Dendritic cell treated with granulocyte-macrophage colony-stimulating factor and Interleukin-4, amounts not matched to agents 40 ng/mL and 50 ng/mL, for 4 days (primary cell): ENCODE measurements at regions of chr6 and their contacts with region 1.

Region 1: DNA sequence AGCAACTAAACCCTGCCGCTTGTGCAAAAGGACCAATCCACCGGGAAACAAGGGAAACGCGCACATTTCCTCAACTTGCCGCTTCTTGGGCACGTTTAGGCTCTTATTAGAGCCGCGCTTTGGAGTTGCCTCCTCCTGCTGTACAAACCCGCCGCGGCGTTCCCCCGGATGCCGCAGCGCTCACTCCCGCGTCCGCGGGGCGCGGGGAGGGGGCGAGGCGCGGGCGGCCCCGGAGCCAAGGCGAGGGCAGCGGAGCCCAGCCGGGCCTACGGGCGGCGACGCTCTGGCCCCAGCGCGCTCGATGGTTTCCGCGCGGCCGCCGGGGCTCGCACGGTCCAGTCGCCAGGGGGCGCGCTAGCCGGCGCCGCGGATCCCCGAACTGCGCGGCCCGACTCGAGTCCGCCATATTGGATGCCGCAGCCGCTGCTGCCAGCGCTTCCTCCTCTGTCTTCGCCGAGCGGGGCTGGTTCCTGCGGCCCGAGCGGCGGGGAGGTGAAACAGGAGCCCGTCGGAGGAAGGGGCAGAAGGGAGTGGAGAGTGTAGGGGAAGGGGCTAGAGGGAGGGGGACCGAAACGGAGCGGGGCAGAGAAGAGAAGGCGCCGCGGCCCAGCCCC is at the start of gene SCAF8:
- H3K4me3 Mint-ChIP-seq: peak within 1 kb of the TSS; percentile 94
- H3K27ac Mint-ChIP-seq: peak within 1 kb of the TSS; percentile 99
- H3K4me1 Mint-ChIP-seq: peaks cover 39% of the 10 kb centered on the region
- H3K27me3 Mint-ChIP-seq: peaks cover 3% of the 10 kb centered on the region

Region 2: GRCh38 chr6:154352898-154353585 is 380.1 kb before region 1 on chr6:
- intact Hi-C with region 1: loop called (anchors 10 kb)
- H3K4me3 Mint-ChIP-seq: peak overlapping the region; percentile 13
- H3K27ac Mint-ChIP-seq: peak overlapping the region; percentile 87
- H3K4me1 Mint-ChIP-seq: peaks cover 48% of the 10 kb centered on the region
- H3K27me3 Mint-ChIP-seq: no peaks in the 10 kb centered on the region

Region 3: GRCh38 chr6:154675602-154676088 is 57.5 kb before region 1 on chr6:
- intact Hi-C with region 1: loop called (anchors 1 kb)
- H3K4me3 Mint-ChIP-seq: no peak overlapping the region
- H3K27ac Mint-ChIP-seq: no peak overlapping the region
- H3K4me1 Mint-ChIP-seq: no peaks in the 10 kb centered on the region
- H3K27me3 Mint-ChIP-seq: no peaks in the 10 kb centered on the region

Region 4: GRCh38 chr6:154805288-154805911 is 72.3 kb after region 1 on chr6:
- intact Hi-C with region 1: loop called (anchors 5 kb)
- H3K4me3 Mint-ChIP-seq: no peak overlapping the region
- H3K27ac Mint-ChIP-seq: no peak overlapping the region
- H3K4me1 Mint-ChIP-seq: peaks cover 2% of the 10 kb centered on the region
- H3K27me3 Mint-ChIP-seq: no peaks in the 10 kb centered on the region